Left cardiac atrium (tissue), 4 donors: ENCODE measurements at regions of chr1 and their contacts with region 1.

Region 1: DNA sequence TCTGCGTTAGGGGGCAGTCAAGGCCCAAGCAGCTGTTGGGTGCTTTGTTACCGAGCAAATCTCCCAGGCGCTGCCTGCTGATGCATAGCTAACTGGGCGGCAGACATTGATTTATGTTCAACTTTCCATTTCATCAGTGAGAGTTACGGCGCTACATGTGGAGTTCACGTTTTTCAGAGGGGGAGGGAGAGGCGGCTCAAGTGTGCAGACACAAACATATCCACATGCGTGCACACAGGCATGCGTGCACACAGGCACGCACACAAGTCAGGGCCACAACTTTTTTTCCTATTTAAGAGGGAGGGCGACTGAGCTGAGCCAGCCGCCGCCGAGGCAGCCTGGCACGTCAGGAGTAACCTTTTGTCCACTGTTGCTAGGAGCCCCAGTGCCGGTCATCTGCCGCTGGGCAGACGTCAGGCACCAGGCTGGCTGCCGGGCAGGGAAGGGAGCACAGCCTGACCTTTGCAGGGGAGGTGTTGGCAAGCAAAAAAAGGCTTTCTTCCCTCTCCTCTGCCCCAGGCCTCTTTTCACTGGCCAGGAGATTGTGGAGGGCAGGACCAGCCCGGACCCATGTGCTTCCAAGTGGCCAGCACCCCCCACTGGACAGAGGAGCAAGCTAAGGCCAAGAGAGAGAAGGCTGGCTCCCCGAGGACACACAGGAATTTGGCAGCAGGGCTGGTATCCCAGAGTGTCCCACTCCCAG is 73.3 kb downstream of the MRPL37 start:
- DNase-seq: peak; percentile 73
- ATAC-seq: peak; percentile 67 to 78

Region 2: DNA sequence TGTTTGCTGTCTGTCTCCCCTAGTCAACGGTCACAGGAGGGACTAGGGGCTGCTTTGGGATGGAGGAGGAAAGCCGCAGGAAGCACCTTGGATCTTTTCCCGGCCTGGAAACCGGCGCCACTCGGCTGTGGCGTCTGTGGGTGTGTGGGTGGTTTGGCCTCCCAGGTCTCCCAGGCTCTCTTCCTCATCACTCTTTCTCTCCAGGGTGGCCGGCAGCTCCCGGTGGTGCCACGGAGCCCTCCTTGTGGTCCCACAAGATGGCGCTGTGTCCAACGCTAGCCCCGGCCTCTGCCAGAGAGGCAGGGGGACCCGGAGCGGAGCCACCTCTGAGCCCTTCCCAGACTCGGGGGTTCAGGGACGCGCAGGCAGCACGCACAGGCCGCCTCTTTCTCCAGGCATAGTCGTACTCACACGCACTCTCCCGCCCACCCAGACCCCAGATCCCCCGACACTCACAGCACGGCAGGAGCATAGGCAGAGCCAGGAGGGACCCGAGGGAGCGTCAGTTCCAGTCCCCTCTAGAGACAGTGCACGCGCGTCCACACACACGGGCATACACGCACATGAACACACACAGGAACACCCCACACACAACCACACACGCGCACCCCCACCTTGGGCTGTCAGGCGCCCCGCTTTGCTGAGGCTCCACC is 151.6 kb before region 1 on chr1:
- intact Hi-C with region 1: loop called in 1 of 2 experiments (anchors 10 kb)
- DNase-seq: peak; percentile 85
- ATAC-seq: peak; percentile 91 to 92

Region 3: DNA sequence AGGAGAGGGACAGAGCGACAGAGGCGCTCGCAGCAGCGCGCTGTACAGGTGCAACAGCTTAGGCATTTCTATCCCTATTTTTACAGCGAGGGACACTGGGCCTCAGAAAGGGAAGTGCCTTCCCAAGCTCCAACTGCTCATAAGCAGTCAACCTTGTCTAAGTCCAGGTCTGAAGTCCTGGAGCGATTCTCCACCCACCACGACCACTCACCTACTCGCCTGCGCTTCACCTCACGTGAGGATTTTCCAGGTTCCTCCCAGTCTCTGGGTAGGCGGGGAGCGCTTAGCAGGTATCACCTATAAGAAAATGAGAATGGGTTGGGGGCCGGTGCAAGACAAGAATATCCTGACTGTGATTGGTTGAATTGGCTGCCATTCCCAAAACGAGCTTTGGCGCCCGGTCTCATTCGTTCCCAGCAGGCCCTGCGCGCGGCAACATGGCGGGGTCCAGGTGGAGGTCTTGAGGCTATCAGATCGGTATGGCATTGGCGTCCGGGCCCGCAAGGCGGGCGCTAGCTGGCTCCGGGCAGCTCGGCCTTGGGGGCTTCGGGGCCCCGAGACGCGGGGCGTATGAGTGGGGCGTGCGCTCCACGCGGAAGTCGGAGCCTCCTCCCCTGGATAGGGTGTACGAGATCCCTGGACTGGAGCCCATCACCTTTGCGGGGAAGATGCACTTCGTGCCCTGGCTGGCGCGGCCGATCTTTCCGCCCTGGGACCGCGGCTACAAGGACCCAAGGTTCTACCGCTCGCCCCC is 73.3 kb before region 1 on chr1 and contains the starts of genes CYB5RL and MRPL37:
- intact Hi-C with region 1: loop called in 1 of 2 experiments (anchors 10 kb)
- DNase-seq: peak; percentile 92
- ATAC-seq: peak; percentile 99
- total RNA-seq, gene CYB5RL: 4.4 to 7.2 TPM
- total RNA-seq, gene MRPL37: 54.7 to 64.2 TPM

Region 4: DNA sequence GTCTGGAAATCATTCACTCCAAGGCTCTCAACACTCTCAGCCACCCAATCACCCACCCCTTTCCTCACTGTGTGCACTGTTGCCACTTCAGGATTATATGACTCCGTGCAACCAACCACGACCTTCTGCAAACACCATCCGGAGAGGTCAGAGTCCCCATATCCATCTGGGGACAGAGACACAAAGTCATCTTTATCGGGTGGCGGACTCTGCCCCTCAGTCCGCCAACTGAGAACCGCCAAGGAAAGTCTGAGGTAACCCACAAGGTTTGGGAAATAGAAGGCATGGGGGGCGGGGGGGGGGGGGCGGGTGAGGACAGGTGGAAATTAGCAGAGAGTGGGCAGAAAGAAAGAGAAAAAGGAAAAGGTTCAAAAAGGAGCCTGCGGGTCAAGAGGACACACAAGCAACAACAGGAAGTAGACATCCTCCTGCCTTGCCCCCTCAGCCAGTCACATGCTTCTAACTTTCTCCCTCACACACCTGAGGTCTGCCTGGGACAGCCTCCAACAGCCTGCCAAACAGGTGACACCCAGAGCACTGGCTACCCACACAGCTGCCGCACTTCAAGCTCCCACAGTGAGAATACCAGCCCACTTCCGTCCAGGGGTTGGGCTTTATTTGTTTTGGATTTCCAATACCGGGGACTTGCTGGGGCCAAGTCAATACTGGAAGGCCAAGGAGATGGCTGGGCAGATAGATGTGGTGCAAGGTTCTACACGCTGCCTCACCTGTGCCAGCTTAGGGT is 74.9 kb after region 1 on chr1:
- intact Hi-C with region 1: no loop called
- DNase-seq: no peak
- ATAC-seq: no peak